Posterior cingulate gyrus (tissue), 11 donors: ENCODE measurements at regions of chr2 and their contacts with region 1.

Region 1: DNA sequence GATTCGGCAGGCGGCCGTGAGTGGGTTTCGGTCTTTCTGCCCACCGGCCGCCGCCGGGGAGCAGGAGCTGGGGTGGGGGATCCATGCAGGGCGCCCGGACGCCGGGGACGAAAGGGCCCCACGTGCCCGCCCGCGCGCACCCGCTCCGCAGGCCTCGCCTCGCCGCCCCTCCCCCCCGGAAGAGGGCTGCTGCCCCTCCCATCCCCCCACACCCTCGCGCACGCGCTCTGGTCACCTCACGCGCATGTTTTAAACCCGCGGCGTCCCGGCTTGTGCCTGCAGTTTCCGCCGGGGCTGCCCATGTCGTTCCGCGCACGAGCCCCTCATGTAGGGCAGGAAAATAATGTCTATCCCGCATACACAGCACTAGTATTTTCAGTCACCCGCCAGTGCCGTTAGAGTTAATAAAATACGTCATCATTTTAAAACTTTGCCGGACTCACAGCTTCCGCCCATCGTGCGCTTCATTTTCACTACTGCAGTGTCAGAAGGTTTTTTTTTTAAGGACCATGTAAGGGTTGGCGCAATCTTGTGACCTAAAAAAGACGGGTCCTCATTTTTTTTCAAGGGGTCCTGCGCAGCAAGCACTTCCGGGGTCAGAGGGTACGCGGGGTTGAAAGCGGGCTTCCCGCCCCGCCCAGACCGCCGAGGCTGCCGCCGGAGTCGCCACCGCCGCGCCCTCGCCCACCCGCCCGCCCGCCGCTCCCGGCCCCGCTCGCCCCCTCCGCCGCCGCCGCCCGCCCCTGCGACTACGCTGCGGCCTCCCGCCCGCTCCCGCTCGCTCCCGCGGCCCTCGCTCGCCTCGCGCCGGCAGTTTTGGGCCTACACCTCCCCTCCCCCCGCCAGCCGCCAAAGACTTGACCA is at the start of gene PCBP1:
- DNase-seq: peak; percentile 85 to 98 (median 90)

Region 2: GRCh38 chr2:69416147-69416546 is 670.9 kb before region 1 on chr2:
- intact Hi-C with region 1: no loop called
- DNase-seq: no peak

Region 3: GRCh38 chr2:69619725-69620124 is 467.3 kb before region 1 on chr2:
- intact Hi-C with region 1: no loop called
- DNase-seq: no peak

Region 4: GRCh38 chr2:69829256-69830046 is 257.6 kb before region 1 on chr2 and contains the start of gene GMCL1:
- intact Hi-C with region 1: loop called (anchors 5 kb)
- DNase-seq: peak; percentile 93 to 99 (median 95)

Region 5: GRCh38 chr2:69914170-69914960 is 172.7 kb before region 1 on chr2:
- intact Hi-C with region 1: loop called (anchors 5 kb)
- DNase-seq: peak; percentile 98 to 100 (median 100)

Region 6: DNA sequence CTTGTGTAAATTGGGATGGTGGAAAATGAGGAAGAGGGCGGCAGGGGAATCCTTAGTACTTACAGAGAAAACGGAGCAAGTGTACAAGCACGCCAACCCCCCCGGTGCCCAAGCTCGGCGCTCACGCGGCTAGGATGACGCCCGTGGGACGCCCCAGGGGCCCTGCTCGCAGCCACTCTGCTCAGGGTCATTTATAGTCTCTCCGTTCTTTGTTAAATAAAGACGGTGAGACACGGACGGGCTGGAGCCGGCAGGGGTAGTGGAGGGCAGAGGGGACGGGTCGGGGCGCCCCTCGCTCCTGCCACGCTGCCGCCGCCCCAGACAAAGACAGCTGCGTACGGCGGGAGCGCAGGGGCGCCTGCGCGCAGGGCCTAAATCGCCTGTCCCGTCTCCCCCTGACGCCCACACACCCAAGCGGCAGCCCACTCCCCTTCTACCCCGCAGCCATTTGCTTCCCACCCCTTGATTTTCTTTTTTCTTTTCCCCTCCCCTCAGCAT is 38.0 kb after region 1 on chr2:
- intact Hi-C with region 1: loop called (anchors 5 kb)
- DNase-seq: peak in 9 of 10 donors; percentile 51 to 93 (median 63)

Region 7: GRCh38 chr2:70142590-70143313 is 55.7 kb after region 1 on chr2:
- intact Hi-C with region 1: loop called (anchors 1 kb)
- DNase-seq: peak; percentile 92 to 99 (median 96)